B cell (primary cell): ENCODE measurements at regions of chr6 and their contacts with region 1.

Region 1: GRCh38 chr6:167898673-167899311 is 72.1 kb downstream of the AFDN start:
- DNase-seq: peak; percentile 24
- ATAC-seq: no peak
- H3K4me3 ChIP-seq: no peak overlapping the region
- H3K4me3 Mint-ChIP-seq: no peak overlapping the region
- H3K27ac ChIP-seq: no peak overlapping the region
- H3K27ac Mint-ChIP-seq: no peak overlapping the region
- H3K4me1 ChIP-seq: no peaks in the 10 kb centered on the region
- H3K4me1 Mint-ChIP-seq: no peaks in the 10 kb centered on the region
- H3K27me3 ChIP-seq: no peaks in the 10 kb centered on the region
- H3K27me3 Mint-ChIP-seq: no peaks in the 10 kb centered on the region
- CTCF ChIP-seq: peak; percentile 73

Region 2: DNA sequence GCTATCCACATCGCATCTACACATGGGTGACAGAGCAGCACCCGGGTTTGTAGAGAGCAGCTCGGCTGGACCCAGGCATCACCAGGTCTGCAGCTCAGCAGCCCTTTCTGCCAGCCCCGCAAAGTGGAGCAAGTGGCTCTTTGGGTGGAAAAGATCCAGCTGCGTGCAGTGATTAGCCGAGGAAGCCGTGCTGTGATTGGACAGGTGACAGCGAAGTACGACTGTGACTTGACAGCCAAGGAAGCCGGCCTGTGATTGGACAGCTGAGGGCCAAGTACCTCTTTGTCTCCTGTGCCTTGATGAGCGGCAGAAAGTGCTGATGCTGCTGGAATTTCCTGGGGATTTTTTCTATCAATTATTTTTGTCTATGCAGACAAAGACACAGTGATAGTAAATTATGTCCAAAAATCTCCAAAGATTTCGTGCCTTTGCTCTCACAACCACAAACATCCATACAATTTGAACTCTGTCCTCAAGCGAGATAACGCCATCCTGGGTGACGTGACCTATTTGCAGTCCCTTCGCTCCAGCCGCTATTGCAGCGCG is 678.8 kb before region 1 on chr6:
- CTCF ChIA-PET with region 1: interaction called, 4 read pairs
- POLR2A ChIA-PET with region 1: no interaction called
- intact Hi-C with region 1: loop called (anchors 5 kb)
- DNase-seq: no peak
- ATAC-seq: no peak
- H3K4me3 ChIP-seq: no peak overlapping the region
- H3K4me3 Mint-ChIP-seq: no peak overlapping the region
- H3K27ac ChIP-seq: no peak overlapping the region
- H3K27ac Mint-ChIP-seq: no peak overlapping the region
- H3K4me1 ChIP-seq: no peaks in the 10 kb centered on the region
- H3K4me1 Mint-ChIP-seq: no peaks in the 10 kb centered on the region
- H3K27me3 ChIP-seq: no peaks in the 10 kb centered on the region
- H3K27me3 Mint-ChIP-seq: peaks cover 9% of the 10 kb centered on the region
- CTCF ChIP-seq: no peak

Region 3: GRCh38 chr6:167409694-167410093 is 489.1 kb before region 1 on chr6:
- CTCF ChIA-PET with region 1: no interaction called
- POLR2A ChIA-PET with region 1: no interaction called
- intact Hi-C with region 1: no loop called
- DNase-seq: no peak
- ATAC-seq: no peak
- H3K4me3 ChIP-seq: no peak overlapping the region
- H3K4me3 Mint-ChIP-seq: no peak overlapping the region
- H3K27ac ChIP-seq: no peak overlapping the region
- H3K27ac Mint-ChIP-seq: no peak overlapping the region
- H3K4me1 ChIP-seq: no peaks in the 10 kb centered on the region
- H3K4me1 Mint-ChIP-seq: no peaks in the 10 kb centered on the region
- H3K27me3 ChIP-seq: no peaks in the 10 kb centered on the region
- H3K27me3 Mint-ChIP-seq: peaks cover 15% of the 10 kb centered on the region
- CTCF ChIP-seq: no peak